ENCODE measurements at regions of chr19 and their contacts with region 1.

Region 1: DNA sequence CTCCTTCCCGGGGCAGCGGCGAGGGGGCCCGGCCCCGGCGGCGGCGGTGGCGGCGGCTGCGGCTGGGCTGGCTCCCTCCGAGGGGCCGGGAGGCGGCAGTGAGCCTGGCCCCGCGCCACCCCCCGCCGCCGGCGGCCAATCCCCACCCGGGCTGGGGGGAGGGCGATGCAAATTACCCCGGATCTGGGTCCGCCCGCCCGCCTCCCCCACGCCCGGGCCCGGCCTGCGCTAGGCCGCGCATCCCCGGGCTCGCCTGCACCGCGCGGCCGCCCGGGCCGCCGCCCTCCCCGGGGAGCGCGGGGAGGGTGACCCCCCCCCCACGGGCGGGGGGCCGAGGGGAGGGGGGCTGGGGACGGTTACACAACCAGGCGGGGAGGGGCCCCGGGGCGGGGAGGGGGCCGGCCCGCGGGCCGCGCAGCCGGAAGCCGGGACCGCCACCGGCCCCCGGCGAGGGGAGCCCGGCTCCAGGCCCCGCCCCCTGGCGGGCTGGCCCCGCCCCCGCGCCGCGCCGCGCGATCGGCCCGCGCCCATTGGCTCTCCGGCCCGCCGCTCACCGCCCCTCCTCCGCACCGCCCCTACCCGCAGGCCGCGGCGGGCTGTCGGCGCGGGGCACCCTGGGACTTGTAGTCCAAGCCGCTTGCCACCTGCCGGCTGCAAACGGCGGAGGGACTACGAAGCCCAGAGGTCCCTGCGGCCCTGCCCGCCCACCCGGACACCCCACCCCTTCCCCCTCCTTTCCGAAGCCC is 1.1 kb downstream of the ZBTB7A start:
- DNase-seq: peak; percentile 99
- ATAC-seq: peak; percentile 76
- H3K4me3 Mint-ChIP-seq: peak overlapping the region; percentile 70
- H3K27ac Mint-ChIP-seq: no peak overlapping the region
- H3K4me1 Mint-ChIP-seq: peaks cover 50% of the 10 kb centered on the region
- H3K27me3 Mint-ChIP-seq: no peaks in the 10 kb centered on the region
- CTCF ChIP-seq: no peak

Region 2: DNA sequence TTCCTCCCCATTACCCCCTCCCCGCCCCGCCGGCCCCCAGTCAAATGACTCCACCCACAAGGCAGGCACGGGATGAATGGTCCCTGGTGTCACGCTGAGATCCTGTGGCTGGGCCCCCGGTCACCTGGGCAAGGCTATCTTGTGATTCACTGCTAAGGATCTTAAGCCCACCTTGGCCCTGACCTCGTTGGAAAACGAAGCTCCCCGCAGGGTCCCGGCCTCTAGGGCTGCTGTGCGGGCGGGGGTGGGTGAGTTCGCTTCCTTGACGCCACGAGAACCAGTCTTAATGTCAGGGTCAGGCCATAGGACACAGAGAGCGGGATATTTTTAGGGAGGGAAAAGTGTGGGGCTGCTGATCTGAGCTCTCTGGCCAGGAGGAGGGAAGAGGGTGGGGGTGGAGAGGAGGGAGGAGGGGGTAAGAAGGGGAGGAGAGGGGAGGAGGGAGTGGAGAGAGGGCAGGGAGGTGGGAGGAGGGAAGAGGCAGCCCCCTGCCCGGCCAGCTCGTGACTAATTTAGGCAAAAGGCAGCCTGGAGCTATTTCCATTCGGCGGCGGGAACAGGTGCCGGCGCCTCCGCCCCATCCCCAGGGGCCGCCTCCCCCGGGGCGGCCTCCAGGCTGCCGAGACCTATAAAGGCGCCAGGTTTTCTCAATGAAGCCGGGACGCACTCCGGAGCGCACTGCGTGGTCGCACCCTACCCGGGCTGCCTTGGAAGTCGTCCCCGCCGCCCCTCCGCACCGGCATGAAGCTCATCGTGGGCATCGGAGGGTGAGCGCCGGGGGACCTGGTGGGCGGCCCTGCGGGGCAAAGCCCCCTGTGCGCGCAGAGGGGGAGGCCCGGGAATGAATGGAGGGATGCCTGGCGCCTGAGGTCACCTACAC is 132.4 kb before region 1 on chr19 and contains the start of gene NMRK2:
- CTCF ChIA-PET with region 1: no interaction called
- POLR2A ChIA-PET with region 1: no interaction called
- intact Hi-C with region 1: no loop called
- DNase-seq: no peak
- ATAC-seq: no peak
- H3K4me3 Mint-ChIP-seq: no peak within 1 kb of the TSS
- H3K27ac Mint-ChIP-seq: no peak within 1 kb of the TSS
- H3K4me1 Mint-ChIP-seq: no peaks in the 10 kb centered on the region
- H3K27me3 Mint-ChIP-seq: peaks cover 15% of the 10 kb centered on the region
- CTCF ChIP-seq: no peak
- total RNA-seq, gene NMRK2: not detected in 2 replicates

Region 3: DNA sequence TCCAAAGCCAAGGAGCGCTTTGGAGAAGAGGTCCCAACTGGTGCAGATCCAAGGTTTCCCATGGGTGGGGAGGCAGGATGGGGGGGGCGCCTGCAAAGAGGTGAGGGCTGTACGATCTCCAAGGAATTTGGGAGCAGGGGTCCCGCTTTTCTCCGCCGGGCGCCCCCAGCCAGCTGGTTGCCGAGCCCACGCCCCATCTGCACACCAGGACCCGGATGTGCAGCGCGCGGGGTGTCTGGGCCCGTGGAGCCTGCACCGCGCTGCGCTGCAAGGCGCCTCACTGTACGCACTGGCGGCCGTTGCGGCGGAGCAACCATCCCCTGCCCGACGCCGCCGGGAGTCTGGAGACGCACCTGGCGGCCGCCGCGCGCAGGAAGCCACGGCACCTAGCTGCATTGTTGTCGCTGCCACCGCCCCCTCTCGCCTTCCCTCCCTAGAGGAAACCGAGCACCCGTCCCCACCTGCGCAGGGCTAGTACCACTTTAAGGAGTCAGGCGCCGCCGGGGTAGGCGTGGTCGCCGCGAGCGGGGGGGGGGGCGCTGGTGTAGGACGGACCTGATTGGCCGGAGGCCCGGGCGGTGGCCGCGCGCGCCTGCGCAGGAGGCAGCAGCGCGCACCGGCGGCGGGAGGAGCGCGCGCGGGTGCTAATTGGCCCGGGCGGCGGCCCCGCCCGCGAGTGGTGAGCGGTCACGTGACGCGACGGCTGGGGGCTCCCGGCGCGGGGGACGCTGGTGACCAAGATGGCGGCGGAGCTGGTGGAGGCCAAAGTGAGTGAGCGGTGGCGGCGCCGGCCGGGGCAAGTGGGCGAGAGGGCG is 58.4 kb before region 1 on chr19 and contains the start of gene PIAS4:
- CTCF ChIA-PET with region 1: no interaction called
- POLR2A ChIA-PET with region 1: interaction called, 6 read pairs
- intact Hi-C with region 1: loop called (anchors 2 kb)
- DNase-seq: peak; percentile 90
- ATAC-seq: peak; percentile 87
- H3K4me3 Mint-ChIP-seq: peak within 1 kb of the TSS; percentile 84
- H3K27ac Mint-ChIP-seq: peak within 1 kb of the TSS; percentile 74
- H3K4me1 Mint-ChIP-seq: peaks cover 31% of the 10 kb centered on the region
- H3K27me3 Mint-ChIP-seq: no peaks in the 10 kb centered on the region
- CTCF ChIP-seq: no peak
- total RNA-seq, gene PIAS4: 36.4 and 37.2 TPM in 2 replicates

Region 4: GRCh38 chr19:4083677-4084546 is 18.3 kb after region 1 on chr19:
- CTCF ChIA-PET with region 1: no interaction called
- POLR2A ChIA-PET with region 1: interaction called, 29 read pairs
- intact Hi-C with region 1: loop called (anchors 2 kb)
- DNase-seq: peak; percentile 27
- ATAC-seq: peak; percentile 53
- H3K4me3 Mint-ChIP-seq: peak overlapping the region; percentile 70
- H3K27ac Mint-ChIP-seq: peak overlapping the region; percentile 90
- H3K4me1 Mint-ChIP-seq: peaks cover 19% of the 10 kb centered on the region
- H3K27me3 Mint-ChIP-seq: no peaks in the 10 kb centered on the region
- CTCF ChIP-seq: no peak

Region 5: GRCh38 chr19:4115050-4115817 is 49.6 kb after region 1 on chr19:
- CTCF ChIA-PET with region 1: no interaction called
- POLR2A ChIA-PET with region 1: interaction called, 21 read pairs
- intact Hi-C with region 1: no loop called
- DNase-seq: peak; percentile 36
- ATAC-seq: peak; percentile 91
- H3K4me3 Mint-ChIP-seq: peak overlapping the region; percentile 72
- H3K27ac Mint-ChIP-seq: peak overlapping the region; percentile 86
- H3K4me1 Mint-ChIP-seq: peaks cover 54% of the 10 kb centered on the region
- H3K27me3 Mint-ChIP-seq: no peaks in the 10 kb centered on the region
- CTCF ChIP-seq: no peak

Region 6: GRCh38 chr19:4139614-4140236 is 74.1 kb after region 1 on chr19:
- CTCF ChIA-PET with region 1: no interaction called
- POLR2A ChIA-PET with region 1: interaction called, 9 read pairs
- intact Hi-C with region 1: loop called (anchors 1 kb)
- DNase-seq: peak; percentile 84
- ATAC-seq: peak; percentile 95
- H3K4me3 Mint-ChIP-seq: no peak overlapping the region
- H3K27ac Mint-ChIP-seq: peak overlapping the region; percentile 10
- H3K4me1 Mint-ChIP-seq: peaks cover 14% of the 10 kb centered on the region
- H3K27me3 Mint-ChIP-seq: peaks cover 5% of the 10 kb centered on the region
- CTCF ChIP-seq: peak; percentile 71

Region 7: DNA sequence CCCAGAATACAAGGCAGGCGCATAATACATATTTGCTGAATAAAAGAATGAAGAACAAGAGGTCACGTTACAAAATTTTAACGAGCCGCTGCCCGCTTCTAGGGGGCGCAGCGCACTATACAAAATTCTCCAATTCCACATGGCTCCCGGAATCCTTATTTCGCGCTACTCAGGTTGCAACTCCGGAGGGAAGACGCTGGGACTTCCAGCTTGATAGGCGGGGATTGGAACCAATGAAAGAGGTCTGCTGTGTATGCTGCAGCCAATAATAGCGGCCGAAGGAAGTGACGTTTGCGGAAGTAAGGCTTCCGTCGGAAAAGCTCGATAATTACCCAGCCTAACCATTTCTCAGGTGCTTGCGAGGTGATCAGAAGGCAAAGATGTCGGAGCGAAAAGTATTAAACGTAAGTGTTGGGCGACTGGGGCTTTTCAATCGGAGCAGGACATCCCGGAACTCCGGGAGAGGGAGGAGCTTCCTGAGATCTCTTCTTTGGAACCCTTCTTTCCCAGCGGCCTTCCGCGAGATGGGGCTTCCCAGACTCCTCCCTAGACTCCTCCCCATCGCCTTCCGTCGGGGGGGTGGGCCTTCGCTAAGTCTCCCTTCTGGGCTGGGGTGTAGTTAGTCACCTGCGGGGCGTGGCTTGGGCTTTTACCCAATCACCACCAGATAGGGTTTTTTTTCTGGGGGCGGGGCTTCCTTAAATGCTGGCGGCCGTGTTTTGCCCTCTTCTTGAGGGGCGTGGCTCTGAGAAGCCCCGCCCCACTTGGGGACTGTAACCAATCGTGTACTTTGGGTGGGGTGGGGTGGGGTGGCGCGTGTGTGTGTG is 181.4 kb after region 1 on chr19 and contains the start of gene YJU2:
- CTCF ChIA-PET with region 1: no interaction called
- POLR2A ChIA-PET with region 1: no interaction called
- intact Hi-C with region 1: loop called (anchors 2 kb)
- DNase-seq: peak; percentile 89
- ATAC-seq: peak; percentile 96
- H3K4me3 Mint-ChIP-seq: peak within 1 kb of the TSS; percentile 90
- H3K27ac Mint-ChIP-seq: peak within 1 kb of the TSS; percentile 96
- H3K4me1 Mint-ChIP-seq: peaks cover 35% of the 10 kb centered on the region
- H3K27me3 Mint-ChIP-seq: no peaks in the 10 kb centered on the region
- CTCF ChIP-seq: no peak
- total RNA-seq, gene YJU2: 40.7 and 43.0 TPM in 2 replicates

Measured in activated B cell treated with CpG ODN at 0.5 μM for 24 hours (primary cell).